ENCODE measurements at regions of chr1 and their contacts with region 1.

Region 1: GRCh38 chr1:226062558-226063223 is at the start of gene H3-3A:
- DNase-seq: peak; percentile 99
- ATAC-seq: peak; percentile 85
- H3K4me3 Mint-ChIP-seq: peak within 1 kb of the TSS; percentile 97
- H3K27ac Mint-ChIP-seq: peak within 1 kb of the TSS; percentile 100
- H3K4me1 Mint-ChIP-seq: peaks cover 33% of the 10 kb centered on the region
- H3K27me3 Mint-ChIP-seq: no peaks in the 10 kb centered on the region
- CTCF ChIP-seq: no peak
- total RNA-seq, gene H3-3A: 287 to 308 TPM

Region 2: GRCh38 chr1:225987491-225988316 is 75.0 kb before region 1 on chr1:
- CTCF ChIA-PET with region 1: interaction called, 12 read pairs
- POLR2A ChIA-PET with region 1: interaction called, 6 read pairs
- intact Hi-C with region 1: no loop called
- DNase-seq: no peak
- ATAC-seq: peak; percentile 63
- H3K4me3 Mint-ChIP-seq: no peak overlapping the region
- H3K27ac Mint-ChIP-seq: no peak overlapping the region
- H3K4me1 Mint-ChIP-seq: peaks cover 34% of the 10 kb centered on the region
- H3K27me3 Mint-ChIP-seq: no peaks in the 10 kb centered on the region
- CTCF ChIP-seq: peak; percentile 78

Region 3: GRCh38 chr1:225999227-225999911 is 63.3 kb before region 1 on chr1 and contains the start of gene SDE2:
- CTCF ChIA-PET with region 1: interaction called, 14 read pairs
- POLR2A ChIA-PET with region 1: interaction called, 43 read pairs
- intact Hi-C with region 1: loop called (anchors 1 kb)
- DNase-seq: peak; percentile 100
- ATAC-seq: peak; percentile 91
- H3K4me3 Mint-ChIP-seq: peak within 1 kb of the TSS; percentile 98
- H3K27ac Mint-ChIP-seq: peak within 1 kb of the TSS; percentile 100
- H3K4me1 Mint-ChIP-seq: peaks cover 67% of the 10 kb centered on the region
- H3K27me3 Mint-ChIP-seq: no peaks in the 10 kb centered on the region
- CTCF ChIP-seq: no peak
- total RNA-seq, gene SDE2: 14.9 to 15.5 TPM

Region 4: GRCh38 chr1:226078374-226078773 is 15.7 kb after region 1 on chr1:
- CTCF ChIA-PET with region 1: interaction called, 22 read pairs
- POLR2A ChIA-PET with region 1: interaction called, 20 read pairs
- intact Hi-C with region 1: no loop called
- DNase-seq: no peak
- ATAC-seq: no peak
- H3K4me3 Mint-ChIP-seq: no peak overlapping the region
- H3K27ac Mint-ChIP-seq: no peak overlapping the region
- H3K4me1 Mint-ChIP-seq: peaks cover 11% of the 10 kb centered on the region
- H3K27me3 Mint-ChIP-seq: no peaks in the 10 kb centered on the region
- CTCF ChIP-seq: no peak

Region 5: DNA sequence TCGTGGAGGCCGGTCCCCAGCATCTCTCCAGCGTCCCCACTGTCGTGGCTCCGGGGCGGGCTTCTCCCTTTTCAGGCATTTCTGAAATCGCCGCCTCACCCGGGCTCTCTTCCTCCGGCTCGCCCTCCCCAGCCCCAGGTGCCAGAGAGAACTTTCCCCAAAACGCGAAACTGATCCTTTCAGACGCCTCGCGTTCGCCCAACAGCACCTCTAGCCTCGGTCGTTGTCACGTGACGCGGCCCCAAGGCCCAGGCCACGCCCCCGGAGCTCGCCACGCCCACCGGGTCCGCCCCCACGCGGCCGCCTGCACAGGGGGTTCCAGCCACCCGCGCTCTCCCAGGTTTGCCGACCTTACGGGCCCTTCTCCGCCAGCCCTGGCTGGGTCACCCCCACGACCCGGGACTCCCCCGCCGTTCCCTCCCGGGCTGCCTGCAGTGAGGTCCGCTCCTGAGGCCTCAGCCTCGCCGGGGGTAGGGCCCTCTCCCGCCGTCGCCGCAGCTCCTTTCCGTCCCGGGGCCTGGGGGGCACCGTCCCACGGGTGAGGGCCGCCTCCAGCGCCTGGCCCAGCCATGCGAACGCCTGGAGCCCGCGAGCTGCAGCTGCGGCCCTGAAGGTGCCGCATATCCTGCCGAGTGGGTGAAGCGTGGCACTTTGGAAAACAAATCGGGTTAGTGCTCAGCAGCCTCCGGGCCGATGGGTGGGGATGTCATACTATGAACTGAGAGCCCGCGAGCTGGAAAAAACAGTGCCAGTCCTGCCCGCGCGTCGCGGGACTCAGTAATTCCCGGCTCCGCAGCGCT is 20.8 kb after region 1 on chr1:
- CTCF ChIA-PET with region 1: interaction called, 22 read pairs
- POLR2A ChIA-PET with region 1: interaction called, 20 read pairs
- intact Hi-C with region 1: no loop called
- DNase-seq: peak; percentile 94
- ATAC-seq: peak; percentile 96
- H3K4me3 Mint-ChIP-seq: peak overlapping the region; percentile 86
- H3K27ac Mint-ChIP-seq: peak overlapping the region; percentile 81
- H3K4me1 Mint-ChIP-seq: peaks cover 8% of the 10 kb centered on the region
- H3K27me3 Mint-ChIP-seq: no peaks in the 10 kb centered on the region
- CTCF ChIP-seq: no peak

Region 6: DNA sequence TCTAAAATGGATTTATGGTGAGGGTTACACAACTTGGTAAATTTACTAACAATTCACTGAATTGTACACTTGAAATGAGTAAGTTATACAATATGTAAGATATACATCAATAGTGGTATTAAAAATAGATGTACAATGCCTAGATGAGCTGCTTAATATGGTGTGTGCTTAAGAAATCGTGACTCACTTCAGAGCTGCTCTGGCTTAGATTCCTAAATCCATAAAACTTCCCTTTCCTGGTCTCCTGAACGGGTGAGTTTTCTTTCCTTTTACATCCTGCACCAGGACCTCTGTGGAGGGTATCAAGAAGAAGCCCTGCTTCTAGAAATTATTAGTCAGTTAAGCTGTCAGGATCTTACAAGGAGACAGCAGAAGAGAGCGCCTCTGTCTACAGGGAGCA is 30.3 kb after region 1 on chr1:
- CTCF ChIA-PET with region 1: interaction called, 16 read pairs
- POLR2A ChIA-PET with region 1: interaction called, 4 read pairs
- intact Hi-C with region 1: no loop called
- DNase-seq: no peak
- ATAC-seq: no peak
- H3K4me3 Mint-ChIP-seq: no peak overlapping the region
- H3K27ac Mint-ChIP-seq: no peak overlapping the region
- H3K4me1 Mint-ChIP-seq: no peaks in the 10 kb centered on the region
- H3K27me3 Mint-ChIP-seq: no peaks in the 10 kb centered on the region
- CTCF ChIP-seq: no peak

Region 7: DNA sequence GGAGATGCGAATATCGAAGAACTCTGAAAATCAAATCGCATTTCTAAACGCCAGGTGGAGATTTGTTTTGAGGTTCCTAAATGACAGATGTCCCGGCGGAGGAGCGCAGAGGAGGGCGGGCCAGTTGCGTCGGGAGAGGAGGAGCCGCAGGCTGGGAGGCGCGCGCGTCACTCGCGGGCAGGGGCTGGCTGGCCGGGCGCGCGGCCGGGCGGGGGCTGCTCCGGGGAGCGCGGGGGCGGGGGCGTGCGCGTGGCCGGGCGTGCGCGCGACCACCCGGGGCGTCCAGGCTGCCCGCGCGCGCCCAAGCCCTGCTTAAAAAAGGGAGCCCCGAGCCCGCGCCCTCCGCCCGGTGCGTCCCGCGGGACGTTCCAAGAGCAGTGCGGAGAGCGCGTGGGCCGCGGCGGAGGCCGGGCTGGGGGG is 47.1 kb after region 1 on chr1:
- CTCF ChIA-PET with region 1: interaction called, 67 read pairs
- POLR2A ChIA-PET with region 1: interaction called, 20 read pairs
- intact Hi-C with region 1: no loop called
- DNase-seq: peak; percentile 87
- ATAC-seq: peak; percentile 86
- H3K4me3 Mint-ChIP-seq: peak overlapping the region; percentile 73
- H3K27ac Mint-ChIP-seq: peak overlapping the region; percentile 76
- H3K4me1 Mint-ChIP-seq: peaks cover 13% of the 10 kb centered on the region
- H3K27me3 Mint-ChIP-seq: no peaks in the 10 kb centered on the region
- CTCF ChIP-seq: no peak

Measured in activated CD8-positive, alpha-beta T cell treated with anti-CD3 and anti-CD28 coated beads for 36 hours (primary cell).